ENCODE measurements at regions of chr6 and their contacts with region 1.

Region 1: GRCh38 chr6:135014353-135014832 is 40.2 kb downstream of the HBS1L start:
- DNase-seq: no peak
- H3K4me3 ChIP-seq: no peak overlapping the region
- H3K27ac ChIP-seq: no peak overlapping the region
- H3K4me1 ChIP-seq: no peaks in the 10 kb centered on the region
- H3K27me3 ChIP-seq: no peaks in the 10 kb centered on the region
- CTCF ChIP-seq: no peak
- POLR2A ChIP-seq: no peak

Region 2: GRCh38 chr6:135043846-135044245 is 29.5 kb after region 1 on chr6:
- intact Hi-C with region 1: loop called (anchors 2 kb)
- DNase-seq: no peak
- H3K4me3 ChIP-seq: no peak overlapping the region
- H3K27ac ChIP-seq: no peak overlapping the region
- H3K4me1 ChIP-seq: no peaks in the 10 kb centered on the region
- H3K27me3 ChIP-seq: no peaks in the 10 kb centered on the region
- CTCF ChIP-seq: no peak
- POLR2A ChIP-seq: no peak

Region 3: DNA sequence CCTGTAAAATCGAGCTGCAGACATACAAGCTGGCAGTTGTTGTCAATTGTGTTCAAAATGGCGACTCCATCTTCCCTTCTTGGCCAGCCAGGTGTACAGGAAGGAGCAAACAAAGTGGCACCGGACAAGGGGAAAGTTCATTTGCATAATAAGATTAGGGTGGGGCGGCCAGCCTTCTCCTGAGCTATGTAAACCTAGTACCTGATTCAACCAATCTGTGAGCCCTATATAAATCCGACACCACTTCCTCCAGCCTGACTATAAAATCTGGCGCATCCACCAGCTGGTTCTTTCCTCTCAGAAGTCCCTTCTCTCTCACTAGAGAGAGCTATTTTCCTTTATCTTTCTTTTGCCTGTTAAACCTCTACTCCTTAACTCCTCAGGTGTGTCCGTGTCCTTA is 48.3 kb after region 1 on chr6:
- intact Hi-C with region 1: no loop called
- DNase-seq: no peak
- H3K4me3 ChIP-seq: no peak overlapping the region
- H3K27ac ChIP-seq: no peak overlapping the region
- H3K4me1 ChIP-seq: no peaks in the 10 kb centered on the region
- H3K27me3 ChIP-seq: no peaks in the 10 kb centered on the region
- CTCF ChIP-seq: no peak
- POLR2A ChIP-seq: no peak